Left lung (tissue), 14 donors: ENCODE measurements at regions of chr10 and their contacts with region 1.

Region 1: DNA sequence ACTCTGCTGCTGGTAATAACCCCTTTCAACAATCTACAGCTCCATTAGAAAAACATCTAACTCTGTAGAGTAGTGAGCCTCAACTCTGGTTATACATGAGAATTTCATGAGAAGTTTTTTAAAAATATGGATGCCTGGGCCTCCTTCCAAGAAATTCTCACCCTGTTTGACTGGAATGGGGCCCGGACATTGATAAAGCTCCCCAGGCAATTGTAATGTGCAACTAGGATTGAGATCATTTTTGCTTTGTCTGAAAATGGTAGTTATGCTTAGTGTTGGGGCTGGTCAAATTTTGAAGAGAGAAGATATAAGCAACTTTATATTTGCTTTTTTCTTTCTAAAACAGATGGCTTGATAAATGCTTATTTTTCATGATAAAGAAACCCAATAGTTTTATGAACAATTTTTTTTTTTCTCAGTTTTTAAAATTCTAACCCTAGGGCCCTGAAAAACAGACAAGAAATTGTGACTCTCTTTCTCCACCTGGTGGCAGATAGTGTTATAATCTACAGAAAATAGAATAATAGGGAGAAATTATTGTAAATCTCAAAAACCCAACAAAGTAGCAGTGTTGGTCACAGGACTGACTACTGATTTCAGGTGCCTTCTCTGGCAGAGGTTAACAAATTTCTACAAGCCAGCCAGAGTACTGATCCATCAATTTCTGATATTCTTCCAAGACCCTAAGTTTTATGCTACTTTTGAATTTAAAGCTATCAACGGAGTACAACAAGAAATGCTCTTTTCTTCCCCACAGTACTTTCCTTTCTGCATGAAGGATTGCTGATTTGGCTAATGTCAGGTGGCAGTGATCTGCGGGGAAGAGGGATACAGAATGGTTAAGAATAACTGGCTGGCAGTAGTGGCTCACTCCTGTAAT is 174.8 kb downstream of the DKK1 start:
- DNase-seq: peak in 2 of 4 donors; percentile 24 to 48
- ATAC-seq: peak; percentile 60
- H3K4me3 ChIP-seq: no peak overlapping the region
- H3K27ac ChIP-seq: no peak overlapping the region
- H3K4me1 ChIP-seq: no peaks in the 10 kb centered on the region
- H3K27me3 ChIP-seq: no peaks in the 10 kb centered on the region
- CTCF ChIP-seq: peak; percentile 12 to 62

Region 2: DNA sequence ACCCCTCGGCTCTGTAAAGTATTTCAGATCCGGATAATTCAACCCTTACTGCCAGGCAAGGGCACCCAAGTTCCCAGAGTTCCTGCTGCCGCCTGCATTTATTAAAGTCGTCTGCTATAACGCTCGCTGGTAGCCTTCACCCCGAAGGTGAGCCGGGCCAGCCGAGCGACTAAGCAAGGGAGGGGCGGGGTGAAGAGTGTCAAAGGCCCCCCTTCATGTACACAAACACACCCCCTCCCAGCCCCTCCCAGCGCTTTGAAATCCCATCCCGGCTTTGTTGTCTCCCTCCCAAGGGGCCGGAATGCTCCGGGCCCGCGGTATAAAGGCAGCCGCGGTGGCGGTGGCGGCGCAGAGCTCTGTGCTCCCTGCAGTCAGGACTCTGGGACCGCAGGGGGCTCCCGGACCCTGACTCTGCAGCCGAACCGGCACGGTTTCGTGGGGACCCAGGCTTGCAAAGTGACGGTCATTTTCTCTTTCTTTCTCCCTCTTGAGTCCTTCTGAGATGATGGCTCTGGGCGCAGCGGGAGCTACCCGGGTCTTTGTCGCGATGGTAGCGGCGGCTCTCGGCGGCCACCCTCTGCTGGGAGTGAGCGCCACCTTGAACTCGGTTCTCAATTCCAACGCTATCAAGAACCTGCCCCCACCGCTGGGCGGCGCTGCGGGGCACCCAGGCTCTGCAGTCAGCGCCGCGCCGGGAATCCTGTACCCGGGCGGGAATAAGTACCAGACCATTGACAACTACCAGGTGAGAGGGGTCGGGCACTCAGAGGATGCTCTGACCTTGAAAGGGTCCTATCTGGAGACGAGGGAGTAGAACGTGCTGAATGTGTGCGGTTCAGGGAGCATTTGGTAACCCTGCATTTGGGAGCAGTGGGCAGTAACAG is 174.7 kb before region 1 on chr10 and contains the start of gene DKK1:
- intact Hi-C with region 1: loop called in 1 of 2 experiments (anchors 5 kb)
- DNase-seq: peak; percentile 53 to 87 (median 62)
- ATAC-seq: peak; percentile 95
- H3K4me3 ChIP-seq: peak within 1 kb of the TSS; percentile 41 to 42
- H3K27ac ChIP-seq: no peak within 1 kb of the TSS
- H3K4me1 ChIP-seq: peaks cover 9% of the 10 kb centered on the region in 2 donors
- H3K27me3 ChIP-seq: peaks cover 16 to 65% of the 10 kb centered on the region in 2 donors
- CTCF ChIP-seq: peak; percentile 55 to 57
- polyA plus RNA-seq, gene DKK1: 2.7 to 5.2 (median 3.6) TPM